Heart left ventricle (tissue), 16 donors: ENCODE measurements at regions of chr16 and their contacts with region 1.

Region 1: GRCh38 chr16:30407102-30407803 is at the start of gene ZNF771:
- DNase-seq: peak; percentile 94 to 97 (median 94)
- ATAC-seq: peak; percentile 83 to 97 (median 96)
- H3K4me3 ChIP-seq: peak within 1 kb of the TSS; percentile 54 to 96 (median 76)
- H3K27ac ChIP-seq: peak within 1 kb of the TSS; percentile 61 to 93 (median 85)
- H3K4me1 ChIP-seq: peaks cover 0 to 33% (median 17%) of the 10 kb centered on the region in 12 donors
- H3K27me3 ChIP-seq: no peaks in the 10 kb centered on the region
- CTCF ChIP-seq: peak in 3 of 12 donors; percentile 15 to 18 (median 15)
- POLR2A ChIP-seq: peak in 1 of 2 donors; percentile 59
- total RNA-seq, gene ZNF771: 4.8 to 18.8 (median 6.8) TPM

Region 2: GRCh38 chr16:30084816-30085159 is 322.5 kb before region 1 on chr16:
- intact Hi-C with region 1: loop called in 1 of 10 experiments (anchors 5 kb)
- DNase-seq: peak in 3 of 5 donors; percentile 42 to 66 (median 64)
- ATAC-seq: peak in 3 of 4 donors; percentile 25 to 44 (median 30)
- H3K4me3 ChIP-seq: no peak overlapping the region
- H3K27ac ChIP-seq: peak overlapping the region in 6 of 12 donors; percentile 11 to 52 (median 33)
- H3K4me1 ChIP-seq: peaks cover 0 to 27% (median 0%) of the 10 kb centered on the region in 12 donors
- H3K27me3 ChIP-seq: no peaks in the 10 kb centered on the region
- CTCF ChIP-seq: no peak
- POLR2A ChIP-seq: no peak

Region 3: GRCh38 chr16:30370444-30371247 is 36.6 kb before region 1 on chr16 and contains the start of gene TBC1D10B:
- intact Hi-C with region 1: loop called in 4 of 10 experiments (anchors 5 kb)
- DNase-seq: peak; percentile 97 to 99 (median 98)
- ATAC-seq: peak; percentile 90 to 96 (median 94)
- H3K4me3 ChIP-seq: peak within 1 kb of the TSS; percentile 78 to 99 (median 91)
- H3K27ac ChIP-seq: peak within 1 kb of the TSS; percentile 78 to 95 (median 88)
- H3K4me1 ChIP-seq: peaks cover 0 to 49% (median 35%) of the 10 kb centered on the region in 12 donors
- H3K27me3 ChIP-seq: no peaks in the 10 kb centered on the region
- CTCF ChIP-seq: peak in 9 of 12 donors; percentile 7 to 54 (median 29)
- POLR2A ChIP-seq: peak in 1 of 2 donors; percentile 73
- total RNA-seq, gene TBC1D10B: 16.9 to 33.2 (median 24.2) TPM

Region 4: GRCh38 chr16:30378236-30379204 is 28.7 kb before region 1 on chr16:
- intact Hi-C with region 1: loop called in 1 of 10 experiments (anchors 2 kb)
- DNase-seq: peak; percentile 99 to 100 (median 99)
- ATAC-seq: peak; percentile 96 to 98 (median 98)
- H3K4me3 ChIP-seq: peak overlapping the region; percentile 63 to 82 (median 70)
- H3K27ac ChIP-seq: peak overlapping the region; percentile 97 to 100 (median 99)
- H3K4me1 ChIP-seq: peaks cover 0 to 44% (median 15%) of the 10 kb centered on the region in 12 donors
- H3K27me3 ChIP-seq: no peaks in the 10 kb centered on the region
- CTCF ChIP-seq: peak in 5 of 12 donors; percentile 6 to 39 (median 25)
- POLR2A ChIP-seq: peak in 1 of 2 donors; percentile 86